Naive thymus-derived CD8-positive, alpha-beta T cell (primary cell): ENCODE measurements at regions of chr14 and their contacts with region 1.

Region 1: GRCh38 chr14:68979021-68979782 is at the start of gene ACTN1:
- DNase-seq: peak; percentile 32 to 86 (median 74)
- ATAC-seq: peak; percentile 48 to 53
- H3K4me3 Mint-ChIP-seq: peak within 1 kb of the TSS; percentile 92 to 99 (median 96)
- H3K27ac Mint-ChIP-seq: peak within 1 kb of the TSS; percentile 92 to 100 (median 100)
- H3K4me1 Mint-ChIP-seq: peaks cover 38 to 60% (median 52%) of the 10 kb centered on the region in 4 donors
- H3K27me3 Mint-ChIP-seq: no peaks in the 10 kb centered on the region
- polyA plus RNA-seq, gene ACTN1: 144 to 436 (median 267) TPM

Region 2: DNA sequence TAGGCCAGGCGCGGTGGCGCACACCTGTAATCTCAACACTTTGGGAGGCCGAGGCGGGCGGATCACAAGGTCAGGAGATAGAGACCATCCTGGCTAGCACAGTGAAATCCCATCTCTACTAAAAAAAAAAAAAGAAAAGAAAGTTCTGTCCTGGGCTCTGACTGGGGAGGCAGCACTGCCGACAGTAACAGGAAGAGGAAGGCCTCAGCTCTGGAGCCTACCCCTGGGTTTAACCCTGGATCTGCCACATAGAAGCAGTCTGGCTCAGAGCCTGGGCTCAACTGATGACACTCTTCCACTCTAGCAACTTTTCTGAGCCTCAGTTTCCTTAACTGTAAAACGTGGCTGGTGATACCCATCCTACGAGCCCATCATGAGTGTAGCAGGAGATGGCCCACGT is 60.6 kb before region 1 on chr14:
- POLR2A ChIA-PET with region 1: interaction called, 11 read pairs
- DNase-seq: peak in 4 of 10 donors; percentile 10 to 45 (median 28)
- ATAC-seq: peak; percentile 77 to 89
- H3K4me3 Mint-ChIP-seq: peak overlapping the region; percentile 15 to 86 (median 60)
- H3K27ac Mint-ChIP-seq: peak overlapping the region; percentile 73 to 98 (median 90)
- H3K4me1 Mint-ChIP-seq: peaks cover 29 to 85% (median 67%) of the 10 kb centered on the region in 4 donors
- H3K27me3 Mint-ChIP-seq: no peaks in the 10 kb centered on the region

Region 3: DNA sequence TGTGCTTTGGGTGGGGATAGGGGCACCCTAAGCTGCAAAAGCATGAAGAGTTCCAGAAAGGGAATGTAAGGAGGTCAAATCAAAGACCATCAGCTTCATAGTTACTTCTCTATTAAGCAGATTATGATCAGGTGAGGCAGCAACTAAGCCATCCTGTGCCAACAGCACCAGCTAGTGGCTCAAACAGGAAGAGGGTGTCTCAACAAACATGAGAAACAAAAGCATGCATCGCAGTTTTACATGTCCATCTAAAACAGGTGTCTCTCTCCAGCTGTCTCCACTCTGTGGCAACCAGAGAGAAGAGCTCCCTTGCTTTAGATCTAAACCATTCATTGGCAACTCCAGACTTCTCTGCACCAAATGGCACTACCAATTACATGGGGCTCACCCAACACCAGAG is 53.0 kb before region 1 on chr14:
- POLR2A ChIA-PET with region 1: interaction called, 20 read pairs
- DNase-seq: peak in 1 of 10 donors; percentile 43
- ATAC-seq: no peak
- H3K4me3 Mint-ChIP-seq: peak overlapping the region in 5 of 10 donors; percentile 3 to 63 (median 9)
- H3K27ac Mint-ChIP-seq: peak overlapping the region; percentile 49 to 98 (median 90)
- H3K4me1 Mint-ChIP-seq: peaks cover 50 to 96% (median 85%) of the 10 kb centered on the region in 4 donors
- H3K27me3 Mint-ChIP-seq: no peaks in the 10 kb centered on the region

Region 4: GRCh38 chr14:68951042-68951914 is 27.9 kb before region 1 on chr14:
- POLR2A ChIA-PET with region 1: interaction called, 446 read pairs
- DNase-seq: no peak
- ATAC-seq: no peak
- H3K4me3 Mint-ChIP-seq: peak overlapping the region in 9 of 10 donors; percentile 53 to 90 (median 77)
- H3K27ac Mint-ChIP-seq: peak overlapping the region; percentile 86 to 100 (median 95)
- H3K4me1 Mint-ChIP-seq: peaks cover 60 to 94% (median 93%) of the 10 kb centered on the region in 4 donors
- H3K27me3 Mint-ChIP-seq: no peaks in the 10 kb centered on the region

Region 5: GRCh38 chr14:69090187-69090789 is 111.1 kb after region 1 on chr14:
- POLR2A ChIA-PET with region 1: no interaction called
- DNase-seq: peak in 8 of 10 donors; percentile 10 to 65 (median 37)
- ATAC-seq: peak; percentile 76 to 84
- H3K4me3 Mint-ChIP-seq: no peak overlapping the region
- H3K27ac Mint-ChIP-seq: peak overlapping the region in 2 of 10 donors; percentile 12 to 25
- H3K4me1 Mint-ChIP-seq: peaks cover 7 to 20% (median 9%) of the 10 kb centered on the region in 4 donors
- H3K27me3 Mint-ChIP-seq: no peaks in the 10 kb centered on the region